ENCODE measurements at regions of chrX and their contacts with region 1.

Region 1: GRCh38 chrX:16946361-16946964 is at the start of gene REPS2:
- DNase-seq: peak; percentile 73 to 90 (median 84)
- H3K4me3 ChIP-seq: peak within 1 kb of the TSS; percentile 34 to 78 (median 65)
- H3K27ac ChIP-seq: peak within 1 kb of the TSS in 54 of 59 donors; percentile 3 to 84 (median 70)
- H3K27me3 ChIP-seq: peaks cover 0 to 41% (median 5%) of the 10 kb centered on the region in 45 donors
- CTCF ChIP-seq: peak in 1 of 56 donors; percentile 16
- total RNA-seq, gene REPS2: 52.3 to 116 (median 83.4) TPM

Region 2: GRCh38 chrX:16177260-16177659 is 769.2 kb before region 1 on chrX:
- intact Hi-C with region 1: no loop called
- DNase-seq: no peak
- H3K4me3 ChIP-seq: no peak overlapping the region
- H3K27ac ChIP-seq: no peak overlapping the region
- H3K27me3 ChIP-seq: peaks cover 0 to 41% (median 0%) of the 10 kb centered on the region in 45 donors
- CTCF ChIP-seq: no peak

Region 3: DNA sequence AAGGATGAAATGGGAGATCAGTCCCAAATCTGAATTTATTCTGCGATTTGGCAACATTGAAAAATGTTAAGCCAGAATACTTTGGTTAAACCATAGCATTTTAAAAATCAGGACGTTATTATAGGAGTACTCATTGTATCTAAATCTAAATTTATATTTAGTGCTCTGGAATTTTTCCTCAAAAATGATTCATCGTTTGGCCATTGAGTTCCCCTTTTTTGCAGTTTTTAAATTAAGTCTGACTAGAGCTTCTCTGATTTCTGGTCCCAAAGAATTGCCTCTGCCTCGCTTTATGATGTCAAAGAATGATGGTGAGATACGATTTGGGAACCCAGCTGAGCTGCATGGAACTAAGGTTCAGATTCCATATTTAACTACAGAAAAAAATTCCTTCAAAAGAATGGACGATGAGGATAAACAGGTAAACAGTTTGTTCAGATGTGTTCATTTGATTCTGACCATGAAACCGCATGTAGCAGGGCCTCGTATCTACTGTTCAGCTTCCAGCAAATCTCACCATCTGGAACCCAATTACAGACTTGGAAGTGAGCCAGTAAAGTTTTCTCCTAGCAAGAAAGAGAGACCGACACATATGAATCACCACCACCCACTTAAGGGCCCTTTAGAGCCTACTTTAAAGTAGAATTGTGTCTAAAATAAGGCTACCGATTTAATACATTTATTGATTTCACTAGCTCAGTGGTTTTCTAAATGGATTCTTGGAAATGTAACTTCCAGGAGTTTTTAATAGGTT is 75.6 kb after region 1 on chrX:
- intact Hi-C with region 1: loop called in 1 of 2 experiments (anchors 5 kb)
- DNase-seq: no peak
- H3K4me3 ChIP-seq: no peak overlapping the region
- H3K27ac ChIP-seq: peak overlapping the region in 56 of 59 donors; percentile 9 to 89 (median 80)
- H3K27me3 ChIP-seq: peaks cover 0 to 68% (median 8%) of the 10 kb centered on the region in 45 donors
- CTCF ChIP-seq: no peak

Region 4: GRCh38 chrX:17039826-17040225 is 93.4 kb after region 1 on chrX:
- intact Hi-C with region 1: loop called in 1 of 2 experiments (anchors 5 kb)
- DNase-seq: no peak
- H3K4me3 ChIP-seq: no peak overlapping the region
- H3K27ac ChIP-seq: peak overlapping the region in 9 of 59 donors; percentile 9 to 76 (median 60)
- H3K27me3 ChIP-seq: peaks cover 0 to 77% (median 14%) of the 10 kb centered on the region in 45 donors
- CTCF ChIP-seq: no peak